Activated CD8-positive, alpha-beta T cell treated with anti-CD3 and anti-CD28 coated beads, Interleukin-2, amount 10 ng/mL, durations not matched to agents 7 days and 5 days (primary cell): ENCODE measurements at regions of chr5 and their contacts with region 1.

Region 1: GRCh38 chr5:160021831-160022446 is 13.0 kb downstream of the TTC1 start:
- DNase-seq: peak; percentile 75
- ATAC-seq: peak; percentile 86
- H3K4me3 Mint-ChIP-seq: no peak overlapping the region
- H3K27ac Mint-ChIP-seq: no peak overlapping the region
- H3K4me1 Mint-ChIP-seq: peaks cover 20% of the 10 kb centered on the region
- H3K27me3 Mint-ChIP-seq: no peaks in the 10 kb centered on the region

Region 2: DNA sequence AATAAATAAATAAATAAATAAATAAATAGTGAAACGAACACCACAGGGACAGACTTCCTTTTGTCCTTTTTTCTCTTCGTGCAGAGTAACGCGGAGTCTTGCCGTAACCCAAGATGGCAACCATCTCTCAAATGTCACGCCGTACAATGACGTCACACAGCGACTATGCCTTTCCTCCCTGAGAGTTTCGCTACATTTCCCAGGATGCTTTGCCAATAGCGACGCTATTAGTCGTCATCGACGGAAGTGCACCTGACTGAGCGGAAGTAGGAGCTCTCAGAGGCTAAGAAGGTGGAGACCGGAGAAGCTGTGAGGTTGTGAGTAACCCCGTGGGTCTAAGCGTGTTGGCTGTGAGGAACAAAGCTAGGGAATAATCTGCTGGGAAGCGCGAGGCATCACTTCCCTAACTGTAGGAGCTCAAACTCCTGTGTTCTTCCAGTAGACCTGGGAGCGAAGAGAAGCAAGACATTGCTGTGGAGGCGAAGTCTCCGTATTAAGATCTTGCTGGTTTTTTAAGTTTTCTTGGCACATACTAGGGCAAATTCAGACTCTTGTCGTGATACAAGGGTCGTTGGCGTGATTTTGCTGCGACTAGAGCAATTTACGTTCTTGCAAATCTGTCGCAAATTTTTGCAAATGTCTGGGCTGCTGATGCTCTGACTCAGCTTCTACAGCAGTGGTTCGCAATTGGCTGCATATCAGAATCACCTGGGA is 12.9 kb before region 1 on chr5 and contains the start of gene TTC1:
- CTCF ChIA-PET with region 1: interaction called, 58 read pairs
- POLR2A ChIA-PET with region 1: interaction called, 7 read pairs
- DNase-seq: peak; percentile 97
- ATAC-seq: peak; percentile 99
- H3K4me3 Mint-ChIP-seq: peak within 1 kb of the TSS; percentile 94
- H3K27ac Mint-ChIP-seq: peak within 1 kb of the TSS; percentile 97
- H3K4me1 Mint-ChIP-seq: peaks cover 22% of the 10 kb centered on the region
- H3K27me3 Mint-ChIP-seq: no peaks in the 10 kb centered on the region
- total RNA-seq, gene TTC1: 50.1 to 51.6 TPM

Region 3: DNA sequence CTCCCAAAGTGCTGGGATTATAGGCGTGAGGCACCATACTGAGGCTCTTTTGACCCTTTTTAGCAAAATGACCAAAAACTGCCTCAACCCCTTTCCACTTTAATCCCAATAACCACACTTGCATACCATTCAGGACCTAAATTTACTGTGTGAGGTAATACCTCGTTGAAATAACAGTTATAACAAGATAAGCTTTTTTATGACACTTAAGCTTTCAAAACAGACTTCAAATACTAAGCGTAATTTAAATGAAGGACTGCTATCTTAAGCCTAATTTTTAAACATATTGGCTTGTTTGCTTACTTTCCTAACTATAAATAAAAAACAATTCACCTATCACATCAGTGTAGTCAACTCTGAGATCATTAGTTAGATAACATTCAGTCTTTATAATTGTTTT is 59.6 kb after region 1 on chr5:
- CTCF ChIA-PET with region 1: interaction called, 12 read pairs
- POLR2A ChIA-PET with region 1: no interaction called
- DNase-seq: no peak
- ATAC-seq: no peak
- H3K4me3 Mint-ChIP-seq: no peak overlapping the region
- H3K27ac Mint-ChIP-seq: no peak overlapping the region
- H3K4me1 Mint-ChIP-seq: no peaks in the 10 kb centered on the region
- H3K27me3 Mint-ChIP-seq: no peaks in the 10 kb centered on the region

Region 4: DNA sequence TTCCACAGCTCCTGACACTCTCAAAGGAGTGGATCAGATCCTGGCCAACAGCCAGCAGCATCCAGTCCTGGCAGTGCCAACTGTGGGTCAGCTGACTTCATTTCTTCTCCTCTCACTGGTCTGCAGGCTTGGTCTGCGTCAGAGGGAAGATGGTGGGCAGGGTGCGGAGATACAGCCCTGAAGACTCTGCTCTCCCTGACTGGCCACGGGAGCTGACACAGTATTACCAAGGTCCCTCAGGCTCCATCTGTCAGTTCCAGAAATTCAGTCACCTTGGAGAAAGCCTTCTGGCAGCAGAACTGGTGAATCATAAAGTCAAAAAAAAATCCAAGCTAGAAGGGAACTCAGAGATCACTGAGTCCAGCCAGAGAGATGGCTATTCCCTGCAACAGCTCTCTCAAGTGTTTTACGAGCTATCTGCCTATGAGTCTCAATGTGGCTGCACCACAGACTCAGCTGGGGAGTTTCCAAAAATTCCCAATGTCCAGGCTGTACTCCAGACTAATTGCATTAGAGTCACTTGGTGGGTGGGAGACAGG is 320.5 kb after region 1 on chr5:
- CTCF ChIA-PET with region 1: interaction called, 41 read pairs
- POLR2A ChIA-PET with region 1: no interaction called
- DNase-seq: no peak
- ATAC-seq: no peak
- H3K4me3 Mint-ChIP-seq: no peak overlapping the region
- H3K27ac Mint-ChIP-seq: no peak overlapping the region
- H3K4me1 Mint-ChIP-seq: peaks cover 9% of the 10 kb centered on the region
- H3K27me3 Mint-ChIP-seq: peaks cover 3% of the 10 kb centered on the region